ENCODE measurements at regions of chr6 and their contacts with region 1.

Region 1: DNA sequence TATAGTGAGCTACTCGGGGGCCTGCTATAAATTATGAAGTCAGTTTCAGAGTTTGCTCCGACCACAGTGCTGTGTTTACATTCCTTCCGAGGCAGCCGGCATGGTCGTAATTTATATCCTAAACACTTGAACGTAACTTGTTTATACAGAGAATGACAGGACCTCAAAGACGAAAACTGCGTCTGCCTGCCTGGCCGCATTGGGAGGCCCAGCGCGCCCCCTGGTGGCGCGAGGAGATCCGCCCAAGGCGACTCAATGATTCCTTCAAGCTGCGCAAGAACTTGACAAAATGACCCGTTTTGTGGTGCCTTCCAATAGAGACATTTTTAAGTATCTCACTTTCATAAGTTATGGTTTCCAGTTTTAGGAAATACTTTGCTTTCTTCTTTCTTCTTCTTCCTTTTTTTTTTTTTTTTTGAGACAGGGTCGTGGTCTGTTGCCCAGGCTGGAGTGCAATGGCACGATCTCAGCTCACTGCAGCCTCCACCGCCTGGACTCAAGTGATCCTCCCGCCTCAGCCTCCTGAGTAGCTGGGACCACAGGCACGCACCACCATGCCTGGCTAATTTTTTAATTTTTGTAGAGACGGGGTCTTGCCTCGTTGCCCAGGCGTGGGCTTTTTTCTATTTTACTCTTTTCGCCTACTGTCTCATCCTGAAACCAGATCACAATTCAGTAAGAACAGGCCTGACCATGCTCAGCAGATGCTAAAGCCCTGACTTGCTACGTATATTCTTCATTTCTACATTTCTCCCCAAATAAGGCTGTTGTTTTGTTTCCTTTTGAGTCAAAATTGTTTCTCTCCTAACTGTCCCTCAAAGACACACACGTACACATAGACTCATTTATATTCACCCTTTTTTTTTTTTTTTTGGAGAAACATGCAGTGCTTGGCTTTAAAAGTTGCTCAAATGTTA is 7.8 kb downstream of the FOXF2 start:
- DNase-seq: peak; percentile 43
- ATAC-seq: peak; percentile 92
- H3K4me3 ChIP-seq: no peak overlapping the region
- H3K27ac ChIP-seq: no peak overlapping the region
- H3K4me1 ChIP-seq: no peaks in the 10 kb centered on the region
- H3K27me3 ChIP-seq: peaks cover 11 to 17% of the 10 kb centered on the region in 2 experiments
- CTCF ChIP-seq: peak; percentile 88 to 98 (median 97)
- EP300 ChIP-seq: peak; percentile 58 to 74; a peak in 2 of 4 replicates
- POLR2A ChIP-seq: no peak
- RAD21 ChIP-seq: peak; percentile 80

Region 2: DNA sequence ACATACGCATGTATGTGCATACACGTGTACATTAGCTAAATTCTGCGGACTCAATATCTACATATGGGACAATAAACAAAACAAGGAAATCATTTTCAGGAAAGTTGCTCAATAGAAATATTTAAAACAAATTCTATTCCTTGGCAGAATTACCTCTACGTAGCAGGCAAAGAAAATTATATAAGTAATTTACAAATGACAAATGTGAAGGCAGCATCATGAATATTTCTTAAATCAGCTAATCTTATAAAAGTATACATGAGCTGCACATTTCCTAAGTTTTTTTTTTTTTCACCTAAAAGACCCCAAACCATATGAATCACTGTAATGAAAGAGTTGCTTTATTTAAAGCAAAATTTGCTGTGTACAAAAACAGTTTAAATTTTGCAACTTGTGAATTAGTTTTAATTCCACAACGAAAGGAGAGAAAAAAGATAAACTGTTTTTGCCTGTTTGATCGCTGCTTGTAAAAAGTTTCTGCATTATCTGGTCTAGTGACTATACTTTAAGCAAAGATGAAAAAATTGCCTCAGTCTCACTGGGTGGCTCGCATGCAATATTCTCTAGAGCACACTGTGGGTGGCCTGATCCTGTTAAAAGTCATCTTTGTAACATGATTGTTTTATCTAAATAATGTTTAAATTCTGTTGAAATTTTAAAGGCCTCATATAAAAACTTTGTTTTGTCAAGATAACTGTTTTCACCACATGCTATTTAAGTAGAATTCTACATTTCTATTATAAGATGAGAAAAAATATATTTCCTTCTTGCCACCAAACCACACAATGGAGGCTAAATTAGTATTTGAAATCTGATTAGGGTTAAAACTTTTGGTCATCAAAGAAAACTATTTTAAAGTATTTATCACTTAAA is 797.4 kb before region 1 on chr6:
- CTCF ChIA-PET with region 1: no interaction called
- POLR2A ChIA-PET with region 1: no interaction called
- RAD21 ChIA-PET with region 1: no interaction called
- SMC1A ChIA-PET with region 1: interaction called, 3 read pairs
- in situ Hi-C with region 1: loop called (anchors 5 kb)
- intact Hi-C with region 1: no loop called
- DNase-seq: no peak
- ATAC-seq: no peak
- H3K4me3 ChIP-seq: no peak overlapping the region
- H3K27ac ChIP-seq: no peak overlapping the region
- H3K4me1 ChIP-seq: no peaks in the 10 kb centered on the region
- H3K27me3 ChIP-seq: no peaks in the 10 kb centered on the region
- CTCF ChIP-seq: no peak
- EP300 ChIP-seq: no peak
- POLR2A ChIP-seq: no peak
- RAD21 ChIP-seq: no peak

Region 3: DNA sequence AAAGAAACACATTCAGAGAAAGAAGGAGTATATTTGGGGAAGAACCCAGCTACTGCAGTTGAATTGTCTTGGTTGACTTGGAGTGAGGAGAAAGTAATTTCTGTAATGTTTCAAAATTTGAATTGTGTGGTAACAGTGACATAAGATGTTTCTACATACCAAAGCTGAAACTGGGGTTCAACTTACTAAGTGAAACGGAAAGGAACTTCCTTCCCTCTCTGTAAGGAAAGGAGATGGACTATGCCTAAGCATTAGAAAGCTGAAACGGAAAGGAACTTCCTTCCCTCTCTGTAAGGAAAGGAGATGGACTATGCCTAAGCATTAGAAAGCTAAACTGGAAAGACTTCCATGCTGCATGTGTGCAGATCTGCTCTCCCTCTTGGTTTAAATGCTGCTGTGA is 786.3 kb before region 1 on chr6:
- CTCF ChIA-PET with region 1: no interaction called
- POLR2A ChIA-PET with region 1: no interaction called
- RAD21 ChIA-PET with region 1: no interaction called
- SMC1A ChIA-PET with region 1: no interaction called
- in situ Hi-C with region 1: no loop called
- intact Hi-C with region 1: no loop called
- DNase-seq: no peak
- ATAC-seq: peak; percentile 28; the same call in 2 of the 3 replicates
- H3K4me3 ChIP-seq: no peak overlapping the region
- H3K27ac ChIP-seq: no peak overlapping the region
- H3K4me1 ChIP-seq: peaks cover 8% of the 10 kb centered on the region; the same call in 1 of the 2 replicates
- H3K27me3 ChIP-seq: no peaks in the 10 kb centered on the region
- CTCF ChIP-seq: no peak
- EP300 ChIP-seq: no peak
- POLR2A ChIP-seq: no peak
- RAD21 ChIP-seq: no peak

Region 4: DNA sequence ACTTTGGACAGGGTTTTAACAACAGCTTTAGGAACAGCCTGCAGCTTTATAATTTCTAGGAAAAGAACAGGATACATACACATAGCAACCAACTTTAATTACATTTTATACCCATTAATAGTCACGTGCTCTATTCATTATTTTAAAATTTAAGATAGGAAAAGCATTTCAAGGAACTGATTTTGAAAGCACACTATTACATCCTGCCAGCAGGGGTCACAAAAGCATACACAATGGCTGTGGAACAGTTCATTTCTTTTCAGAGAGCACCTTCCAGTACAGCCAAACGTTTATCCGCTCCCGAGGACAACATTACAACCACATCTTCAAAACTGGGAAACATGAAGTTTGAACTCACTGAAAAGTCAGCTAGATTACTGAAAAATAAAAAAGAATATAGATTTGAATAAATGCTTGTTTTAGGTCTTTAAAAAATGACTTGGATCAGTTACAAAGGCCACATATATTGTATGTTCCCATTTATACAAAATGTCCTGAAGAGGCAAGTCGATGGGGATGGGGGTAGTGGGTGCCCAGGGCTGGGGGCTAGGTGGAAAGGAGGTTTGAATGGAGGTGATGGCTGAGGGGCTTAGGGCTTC is 599.6 kb before region 1 on chr6:
- CTCF ChIA-PET with region 1: interaction called, 16 read pairs
- POLR2A ChIA-PET with region 1: no interaction called
- RAD21 ChIA-PET with region 1: no interaction called
- SMC1A ChIA-PET with region 1: interaction called, 6 read pairs
- in situ Hi-C with region 1: no loop called
- intact Hi-C with region 1: loop called (anchors 1 kb)
- DNase-seq: no peak
- ATAC-seq: peak; percentile 64
- H3K4me3 ChIP-seq: no peak overlapping the region
- H3K27ac ChIP-seq: no peak overlapping the region
- H3K4me1 ChIP-seq: no peaks in the 10 kb centered on the region
- H3K27me3 ChIP-seq: peaks cover 3 to 9% of the 10 kb centered on the region in 2 experiments
- CTCF ChIP-seq: peak; percentile 58 to 62 (median 59)
- EP300 ChIP-seq: no peak
- POLR2A ChIP-seq: no peak
- RAD21 ChIP-seq: peak; percentile 89

Region 5: DNA sequence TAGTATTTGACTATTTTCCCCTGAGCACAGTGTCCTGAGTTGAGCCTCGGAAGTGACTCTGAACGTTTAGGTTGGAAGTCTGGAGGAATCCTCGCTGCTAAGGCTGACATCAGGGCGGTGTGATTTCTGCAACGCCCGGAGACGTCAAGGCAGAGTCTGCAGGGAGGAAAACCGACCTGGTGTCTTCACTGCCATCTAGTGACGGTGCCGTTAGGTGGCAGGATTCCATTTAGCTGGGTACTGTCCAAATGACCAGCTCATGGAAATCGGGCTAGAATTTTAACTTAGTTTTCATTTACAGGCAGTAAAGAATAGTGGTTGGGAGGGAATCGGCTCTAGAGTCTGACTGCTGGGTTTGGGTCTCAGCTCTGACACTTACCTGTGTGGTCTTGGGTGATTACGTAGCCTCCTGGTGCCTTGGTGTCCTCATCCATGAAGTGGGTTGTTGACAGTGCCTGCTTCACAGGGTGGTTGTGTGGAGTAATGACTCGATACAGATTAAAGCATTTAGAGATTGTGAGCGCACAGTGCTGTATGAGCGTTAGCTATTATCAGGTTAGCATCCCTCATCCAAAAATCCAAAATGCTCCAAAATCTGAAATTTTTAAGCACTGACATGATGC is 27.2 kb after region 1 on chr6:
- CTCF ChIA-PET with region 1: interaction called, 36 read pairs
- POLR2A ChIA-PET with region 1: no interaction called
- RAD21 ChIA-PET with region 1: interaction called, 3 read pairs
- SMC1A ChIA-PET with region 1: interaction called, 6 read pairs
- in situ Hi-C with region 1: no loop called
- intact Hi-C with region 1: no loop called
- DNase-seq: no peak
- ATAC-seq: peak; percentile 90
- H3K4me3 ChIP-seq: no peak overlapping the region
- H3K27ac ChIP-seq: no peak overlapping the region
- H3K4me1 ChIP-seq: no peaks in the 10 kb centered on the region
- H3K27me3 ChIP-seq: peaks cover 0 to 2% of the 10 kb centered on the region in 2 experiments; a peak in 2 of 4 replicates
- CTCF ChIP-seq: peak; percentile 60 to 74 (median 73)
- EP300 ChIP-seq: no peak
- POLR2A ChIP-seq: no peak
- RAD21 ChIP-seq: peak; percentile 55

Region 6: DNA sequence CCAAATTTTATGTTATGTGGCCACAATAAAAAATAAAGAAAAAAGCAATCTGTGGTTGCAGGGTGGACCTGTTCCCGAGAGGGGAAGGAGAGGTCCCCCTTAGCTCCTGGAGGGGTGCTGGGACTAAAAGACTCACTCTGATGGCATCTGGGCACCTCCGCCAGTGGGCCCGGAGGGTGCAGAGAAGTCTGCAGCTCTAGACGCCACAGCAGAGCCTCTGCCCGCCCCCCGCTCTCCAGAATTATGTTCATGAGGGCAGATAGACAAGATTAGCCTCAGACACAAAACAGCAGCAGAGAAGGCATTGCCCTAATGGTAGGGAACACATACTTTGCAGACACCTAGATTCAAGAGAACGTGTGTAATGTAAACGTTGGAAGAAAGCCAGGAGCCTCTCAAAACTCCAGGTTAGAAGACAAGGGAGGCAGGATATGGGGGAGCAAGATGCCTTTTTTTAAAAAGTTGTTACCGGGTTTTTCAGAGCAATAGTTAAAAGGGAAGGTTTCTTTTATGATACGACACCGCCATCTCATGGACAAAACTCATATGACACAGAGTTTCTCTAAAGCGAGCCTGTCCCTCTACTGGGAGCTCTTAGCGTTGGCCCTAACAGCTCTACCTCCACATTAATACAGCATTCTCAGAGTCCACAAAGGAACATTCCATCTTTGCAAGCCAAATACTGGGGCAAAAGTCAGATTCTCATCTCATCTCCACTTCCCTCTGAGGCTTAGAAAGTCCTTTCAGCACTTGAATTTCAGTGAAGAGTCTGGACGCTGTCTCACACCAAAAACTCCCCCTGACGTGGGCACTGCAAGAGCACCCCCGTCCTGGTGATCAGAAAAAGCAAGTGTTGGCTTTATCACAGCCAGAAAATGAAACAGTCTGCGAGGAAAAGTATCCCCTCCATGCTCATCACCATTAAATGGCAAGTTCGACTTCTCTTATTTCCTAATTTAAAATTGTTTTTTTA is 39.4 kb after region 1 on chr6:
- CTCF ChIA-PET with region 1: interaction called, 15 read pairs
- POLR2A ChIA-PET with region 1: no interaction called
- RAD21 ChIA-PET with region 1: interaction called, 6 read pairs
- SMC1A ChIA-PET with region 1: no interaction called
- in situ Hi-C with region 1: no loop called
- intact Hi-C with region 1: no loop called
- DNase-seq: peak; percentile 30
- ATAC-seq: peak; percentile 92
- H3K4me3 ChIP-seq: no peak overlapping the region
- H3K27ac ChIP-seq: no peak overlapping the region
- H3K4me1 ChIP-seq: no peaks in the 10 kb centered on the region
- H3K27me3 ChIP-seq: peaks cover 0 to 3% of the 10 kb centered on the region in 2 experiments; a peak in 3 of 4 replicates
- CTCF ChIP-seq: peak; percentile 57 to 82 (median 68); a peak in 5 of 6 replicates
- EP300 ChIP-seq: no peak
- POLR2A ChIP-seq: no peak
- RAD21 ChIP-seq: peak; percentile 78

Region 7: GRCh38 chr6:1453024-1453423 is 55.8 kb after region 1 on chr6:
- CTCF ChIA-PET with region 1: no interaction called
- POLR2A ChIA-PET with region 1: no interaction called
- RAD21 ChIA-PET with region 1: no interaction called
- SMC1A ChIA-PET with region 1: no interaction called
- in situ Hi-C with region 1: no loop called
- intact Hi-C with region 1: no loop called
- DNase-seq: no peak
- ATAC-seq: no peak
- H3K4me3 ChIP-seq: no peak overlapping the region
- H3K27ac ChIP-seq: no peak overlapping the region
- H3K4me1 ChIP-seq: no peaks in the 10 kb centered on the region
- H3K27me3 ChIP-seq: no peaks in the 10 kb centered on the region
- CTCF ChIP-seq: no peak
- EP300 ChIP-seq: no peak
- POLR2A ChIP-seq: no peak
- RAD21 ChIP-seq: no peak

Region 8: GRCh38 chr6:1464781-1465370 is 67.7 kb after region 1 on chr6:
- CTCF ChIA-PET with region 1: no interaction called
- POLR2A ChIA-PET with region 1: no interaction called
- RAD21 ChIA-PET with region 1: no interaction called
- SMC1A ChIA-PET with region 1: no interaction called
- in situ Hi-C with region 1: no loop called
- intact Hi-C with region 1: no loop called
- DNase-seq: no peak
- ATAC-seq: no peak
- H3K4me3 ChIP-seq: no peak overlapping the region
- H3K27ac ChIP-seq: no peak overlapping the region
- H3K4me1 ChIP-seq: peaks cover 24% of the 10 kb centered on the region
- H3K27me3 ChIP-seq: no peaks in the 10 kb centered on the region
- CTCF ChIP-seq: no peak
- EP300 ChIP-seq: no peak
- POLR2A ChIP-seq: no peak
- RAD21 ChIP-seq: no peak